GM12878 (cell line): ENCODE measurements at regions of chr14 and their contacts with region 1.

Region 1: DNA sequence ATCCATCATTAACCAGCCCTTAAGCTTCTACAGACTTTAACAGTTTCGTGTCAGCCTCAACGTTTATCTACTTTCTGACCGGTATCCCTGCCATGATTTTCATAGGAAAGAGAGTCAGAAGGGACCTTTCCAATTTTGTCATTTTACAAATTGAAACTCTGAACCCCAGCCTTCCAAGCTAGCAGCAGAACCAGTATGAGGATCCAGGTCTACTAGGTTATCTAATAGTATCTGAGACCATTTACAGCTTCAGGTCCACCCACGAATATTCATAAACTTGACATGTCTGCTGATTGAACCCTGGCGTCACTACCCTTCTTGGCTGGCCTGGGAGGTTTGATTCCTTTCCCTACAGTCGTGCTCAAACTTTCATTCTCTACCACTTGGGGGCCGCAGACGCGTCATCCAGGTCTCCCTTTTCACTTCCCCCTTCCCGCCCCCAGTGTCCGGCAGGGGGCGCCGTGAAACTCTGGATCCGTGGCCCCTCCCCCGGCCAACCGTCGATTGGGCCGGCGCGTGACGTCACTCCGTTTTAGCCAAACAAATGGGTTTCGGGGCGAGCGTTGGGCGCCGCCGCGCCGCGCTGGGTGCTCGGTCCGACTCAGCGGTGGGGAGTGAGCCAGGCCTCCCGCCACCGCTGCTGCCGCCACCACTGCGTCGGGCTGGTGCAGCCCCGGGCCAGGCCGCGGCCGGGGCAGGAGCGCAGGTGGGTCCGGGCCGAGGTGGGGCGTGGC is at the start of gene FBXO34:
- DNase-seq: peak; percentile 87
- ATAC-seq: peak; percentile 93
- H3K4me3 ChIP-seq: peak within 1 kb of the TSS; percentile 93
- H3K27ac ChIP-seq: peak within 1 kb of the TSS; percentile 88
- H3K4me1 ChIP-seq: peaks cover 26% of the 10 kb centered on the region
- H3K27me3 ChIP-seq: no peaks in the 10 kb centered on the region
- CTCF ChIP-seq: peak; percentile 99 to 100 (median 99); a peak in 5 of 6 replicates
- EP300 ChIP-seq: peak; percentile 59 to 82; a peak in 3 of 4 replicates
- POLR2A ChIP-seq: peak; percentile 86
- RAD21 ChIP-seq: peak; percentile 88
- polyA plus RNA-seq, gene FBXO34: 5.6 to 6.8 TPM

Region 2: DNA sequence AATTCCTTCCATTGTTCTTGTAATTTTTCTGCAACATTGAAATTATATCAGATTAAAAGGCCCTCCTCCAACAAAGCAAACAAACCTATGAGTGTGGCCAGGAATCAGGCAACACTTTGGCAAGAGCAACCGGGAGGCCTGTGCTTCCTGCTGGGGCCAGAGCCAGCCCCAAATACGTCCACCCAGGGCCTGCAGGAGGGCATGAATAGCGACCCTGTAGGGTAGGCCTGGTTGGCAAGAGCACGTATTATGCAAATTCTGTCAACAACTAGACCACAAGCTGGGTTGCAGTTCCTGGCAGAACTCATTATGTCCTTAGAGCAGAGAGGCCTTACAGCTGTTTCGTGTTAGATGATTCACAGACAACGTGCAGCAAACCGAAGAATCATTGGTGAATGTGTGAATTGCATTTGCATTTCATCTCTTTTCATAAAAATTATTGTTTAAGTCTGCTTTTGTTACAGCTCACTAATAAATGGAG is 168.8 kb before region 1 on chr14:
- CTCF ChIA-PET with region 1: interaction called, 3 read pairs
- POLR2A ChIA-PET with region 1: no interaction called
- RAD21 ChIA-PET with region 1: interaction called, 3 read pairs
- SMC1A ChIA-PET with region 1: interaction called, 3 read pairs
- in situ Hi-C with region 1: no loop called
- intact Hi-C with region 1: loop called (anchors 10 kb)
- DNase-seq: peak; percentile 99
- ATAC-seq: peak; percentile 84
- H3K4me3 ChIP-seq: 0 out of 2 replicates have a peak overlapping the region, but pooled peaks have one; percentile 4
- H3K27ac ChIP-seq: peak overlapping the region; percentile 99
- H3K4me1 ChIP-seq: peaks cover 62% of the 10 kb centered on the region
- H3K27me3 ChIP-seq: no peaks in the 10 kb centered on the region
- CTCF ChIP-seq: no peak
- EP300 ChIP-seq: peak; percentile 88 to 93; a peak in 3 of 4 replicates
- POLR2A ChIP-seq: peak; percentile 64
- RAD21 ChIP-seq: no peak

Region 3: GRCh38 chr14:55245657-55246268 is 25.2 kb before region 1 on chr14:
- CTCF ChIA-PET with region 1: interaction called, 10 read pairs
- POLR2A ChIA-PET with region 1: no interaction called
- RAD21 ChIA-PET with region 1: interaction called, 8 read pairs
- SMC1A ChIA-PET with region 1: interaction called, 3 read pairs
- in situ Hi-C with region 1: no loop called
- intact Hi-C with region 1: no loop called
- DNase-seq: no peak
- ATAC-seq: peak; percentile 83
- H3K4me3 ChIP-seq: no peak overlapping the region
- H3K27ac ChIP-seq: no peak overlapping the region
- H3K4me1 ChIP-seq: no peaks in the 10 kb centered on the region
- H3K27me3 ChIP-seq: no peaks in the 10 kb centered on the region
- CTCF ChIP-seq: peak; percentile 57 to 68 (median 64); a peak in 5 of 6 replicates
- EP300 ChIP-seq: no peak
- POLR2A ChIP-seq: no peak
- RAD21 ChIP-seq: peak; percentile 68

Region 4: GRCh38 chr14:55301437-55302121 is 30.6 kb after region 1 on chr14:
- CTCF ChIA-PET with region 1: interaction called, 20 read pairs
- POLR2A ChIA-PET with region 1: interaction called, 6 read pairs
- RAD21 ChIA-PET with region 1: interaction called, 8 read pairs
- SMC1A ChIA-PET with region 1: interaction called, 7 read pairs
- in situ Hi-C with region 1: no loop called
- intact Hi-C with region 1: loop called (anchors 2 kb)
- DNase-seq: no peak
- ATAC-seq: peak; percentile 71
- H3K4me3 ChIP-seq: no peak overlapping the region
- H3K27ac ChIP-seq: no peak overlapping the region; the same call in 1 of the 2 replicates
- H3K4me1 ChIP-seq: peaks cover 43% of the 10 kb centered on the region
- H3K27me3 ChIP-seq: no peaks in the 10 kb centered on the region
- CTCF ChIP-seq: no peak
- EP300 ChIP-seq: no peak
- POLR2A ChIP-seq: no peak
- RAD21 ChIP-seq: no peak

Region 5: GRCh38 chr14:55348766-55349453 is 77.9 kb after region 1 on chr14:
- CTCF ChIA-PET with region 1: interaction called, 255 read pairs
- POLR2A ChIA-PET with region 1: interaction called, 6 read pairs
- RAD21 ChIA-PET with region 1: interaction called, 65 read pairs
- SMC1A ChIA-PET with region 1: interaction called, 161 read pairs
- in situ Hi-C with region 1: loop called (anchors 5 kb)
- intact Hi-C with region 1: loop called (anchors 1 kb)
- DNase-seq: no peak
- ATAC-seq: peak; percentile 83
- H3K4me3 ChIP-seq: no peak overlapping the region
- H3K27ac ChIP-seq: peak overlapping the region; percentile 38
- H3K4me1 ChIP-seq: peaks cover 11% of the 10 kb centered on the region
- H3K27me3 ChIP-seq: no peaks in the 10 kb centered on the region
- CTCF ChIP-seq: no peak
- EP300 ChIP-seq: no peak
- POLR2A ChIP-seq: no peak
- RAD21 ChIP-seq: no peak

Region 6: GRCh38 chr14:55430024-55430690 is 159.2 kb after region 1 on chr14:
- CTCF ChIA-PET with region 1: interaction called, 17 read pairs
- POLR2A ChIA-PET with region 1: no interaction called
- RAD21 ChIA-PET with region 1: interaction called, 5 read pairs
- SMC1A ChIA-PET with region 1: interaction called, 3 read pairs
- in situ Hi-C with region 1: no loop called
- intact Hi-C with region 1: loop called (anchors 1 kb)
- DNase-seq: no peak
- ATAC-seq: peak; percentile 91
- H3K4me3 ChIP-seq: no peak overlapping the region
- H3K27ac ChIP-seq: no peak overlapping the region
- H3K4me1 ChIP-seq: peaks cover 3% of the 10 kb centered on the region; the same call in 1 of the 2 replicates
- H3K27me3 ChIP-seq: no peaks in the 10 kb centered on the region
- CTCF ChIP-seq: peak; percentile 34 to 55 (median 48); a peak in 5 of 6 replicates
- EP300 ChIP-seq: no peak
- POLR2A ChIP-seq: no peak
- RAD21 ChIP-seq: peak; percentile 73